ENCODE measurements at regions of chr10 and their contacts with region 1.

Region 1: DNA sequence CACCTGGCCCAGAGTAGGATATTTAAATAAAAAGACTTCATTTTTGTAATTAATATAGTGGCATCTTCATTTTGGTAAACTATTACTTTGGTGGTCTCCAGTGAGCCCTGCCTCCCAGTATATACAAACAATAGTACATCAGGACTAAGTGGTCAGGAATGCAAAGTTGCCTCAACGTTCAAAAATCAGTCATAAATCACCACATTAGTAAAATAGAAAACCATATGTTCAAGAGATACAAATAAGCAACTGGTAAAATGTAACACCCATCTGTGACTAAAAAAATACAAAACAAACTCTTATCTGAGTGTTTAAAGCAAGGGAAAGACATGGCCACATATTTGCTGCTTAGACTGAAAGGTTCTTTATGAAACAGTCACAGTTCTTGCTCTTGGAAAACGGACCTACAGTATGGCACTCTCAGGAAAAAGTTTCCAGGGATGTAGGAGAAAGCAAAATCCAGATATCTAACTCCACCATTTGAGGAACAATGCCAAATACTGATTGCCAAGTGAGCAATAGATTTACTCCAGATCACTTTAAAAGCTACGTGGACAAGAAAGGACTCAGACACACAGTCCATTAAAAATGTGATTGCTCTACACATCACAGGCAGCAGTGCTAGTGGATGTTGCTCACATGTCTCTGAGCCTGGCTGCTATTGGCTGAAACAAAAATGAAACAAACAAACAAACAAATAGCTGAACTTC is 15.1 kb upstream of the RHOBTB1 start:
- DNase-seq: no peak
- ATAC-seq: no peak
- H3K4me3 ChIP-seq: no peak overlapping the region
- H3K27ac ChIP-seq: no peak overlapping the region
- H3K4me1 ChIP-seq: peaks cover 3% of the 10 kb centered on the region; the same call in 1 of the 2 replicates
- H3K27me3 ChIP-seq: no peaks in the 10 kb centered on the region
- CTCF ChIP-seq: no peak

Region 2: GRCh38 chr10:60948851-60949250 is 10.2 kb before region 1 on chr10:
- CTCF ChIA-PET with region 1: interaction called, 17 read pairs
- POLR2A ChIA-PET with region 1: no interaction called
- in situ Hi-C with region 1: no loop called
- intact Hi-C with region 1: no loop called
- DNase-seq: no peak
- ATAC-seq: no peak
- H3K4me3 ChIP-seq: no peak overlapping the region
- H3K27ac ChIP-seq: no peak overlapping the region
- H3K4me1 ChIP-seq: peaks cover 4% of the 10 kb centered on the region
- H3K27me3 ChIP-seq: peaks cover 8% of the 10 kb centered on the region
- CTCF ChIP-seq: no peak